Activated CD4-positive, alpha-beta T cell treated with anti-CD3 and anti-CD28 coated beads, Interleukin-2, amount 10 ng/mL, durations not matched to agents 24 days and 14 days (primary cell): ENCODE measurements at regions of chr16 and their contacts with region 1.

Region 1: GRCh38 chr16:30429678-30430427 is at the start of gene DCTPP1:
- DNase-seq: peak; percentile 99
- H3K4me3 Mint-ChIP-seq: no peak within 1 kb of the TSS
- H3K27ac Mint-ChIP-seq: no peak within 1 kb of the TSS
- H3K4me1 Mint-ChIP-seq: peaks cover 27% of the 10 kb centered on the region
- H3K27me3 Mint-ChIP-seq: no peaks in the 10 kb centered on the region
- total RNA-seq, gene DCTPP1: 167 and 176 TPM in 2 replicates

Region 2: DNA sequence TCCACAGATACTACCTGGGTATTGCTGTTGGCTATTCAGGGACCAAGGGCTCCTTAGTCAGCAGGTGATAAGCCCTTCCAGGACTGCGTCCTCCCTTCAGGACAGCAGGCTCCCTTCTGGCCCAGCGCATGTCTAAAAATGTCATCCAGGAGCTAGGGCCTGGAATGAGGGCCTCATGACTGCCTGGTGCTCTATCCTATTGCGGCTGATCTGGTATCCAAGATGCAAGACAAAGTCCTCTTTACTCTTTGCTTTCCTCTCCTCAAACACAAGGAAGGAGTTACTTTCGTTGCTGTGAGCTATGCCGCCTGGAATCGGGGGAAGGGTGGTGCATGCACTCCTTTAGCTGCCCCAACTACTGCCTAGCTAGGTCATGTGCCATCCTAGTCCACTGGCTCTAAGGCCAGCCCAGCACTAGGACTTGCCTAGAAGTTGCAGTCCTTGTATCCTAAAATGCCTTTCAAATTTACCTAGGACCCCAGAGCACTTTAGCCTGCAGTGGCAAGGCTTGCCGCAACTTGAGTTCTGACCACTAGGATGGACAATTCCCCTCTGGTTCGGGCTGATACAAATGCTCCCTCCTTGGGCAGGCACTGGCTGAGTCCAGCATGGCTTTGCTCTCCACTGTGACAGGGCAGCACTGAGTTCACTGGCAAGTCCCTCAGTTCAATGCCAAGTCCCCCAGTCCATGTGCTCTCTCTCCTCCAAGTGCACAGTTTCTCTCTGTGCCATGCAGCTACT is 478.1 kb before region 1 on chr16:
- intact Hi-C with region 1: no loop called
- DNase-seq: no peak
- H3K4me3 Mint-ChIP-seq: no peak overlapping the region
- H3K27ac Mint-ChIP-seq: no peak overlapping the region
- H3K4me1 Mint-ChIP-seq: no peaks in the 10 kb centered on the region
- H3K27me3 Mint-ChIP-seq: peaks cover 5% of the 10 kb centered on the region

Region 3: DNA sequence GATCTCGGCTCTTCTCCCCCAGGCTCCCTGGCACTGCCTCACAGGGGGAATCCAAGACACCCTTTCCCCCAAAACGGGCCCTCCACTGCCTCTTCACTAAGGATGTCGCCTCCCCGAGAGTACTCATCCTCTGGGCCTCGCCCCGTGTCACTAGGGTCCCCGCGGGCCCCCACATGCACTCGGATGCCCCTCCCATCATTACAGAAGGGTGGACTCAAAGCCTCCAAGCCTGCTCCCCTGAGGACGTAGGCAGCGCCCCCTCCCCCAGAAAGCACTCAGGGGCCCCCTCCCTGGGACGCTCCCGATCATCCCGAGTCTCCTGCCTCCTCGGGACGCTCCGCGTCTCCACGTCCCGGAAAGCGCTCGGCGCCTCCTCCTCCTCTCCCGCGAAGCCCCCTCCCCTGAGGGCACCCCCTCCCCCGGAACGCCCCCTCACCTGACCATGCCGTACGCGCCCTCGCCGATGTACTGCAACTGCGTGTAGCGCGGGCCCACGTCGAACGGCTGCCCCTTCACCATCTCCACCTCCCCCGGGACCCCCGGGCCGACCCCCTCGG is 307.2 kb before region 1 on chr16:
- intact Hi-C with region 1: no loop called
- DNase-seq: no peak
- H3K4me3 Mint-ChIP-seq: peak overlapping the region; percentile 91
- H3K27ac Mint-ChIP-seq: peak overlapping the region; percentile 91
- H3K4me1 Mint-ChIP-seq: peaks cover 23% of the 10 kb centered on the region
- H3K27me3 Mint-ChIP-seq: no peaks in the 10 kb centered on the region

Region 4: GRCh38 chr16:30445408-30446202 is 15.8 kb after region 1 on chr16 and contains the start of gene SEPHS2:
- intact Hi-C with region 1: loop called (anchors 1 kb)
- DNase-seq: peak; percentile 99
- H3K4me3 Mint-ChIP-seq: peak within 1 kb of the TSS; percentile 89
- H3K27ac Mint-ChIP-seq: peak within 1 kb of the TSS; percentile 93
- H3K4me1 Mint-ChIP-seq: peaks cover 34% of the 10 kb centered on the region
- H3K27me3 Mint-ChIP-seq: no peaks in the 10 kb centered on the region
- total RNA-seq, gene SEPHS2: 79.7 and 80.2 TPM in 2 replicates

Region 5: DNA sequence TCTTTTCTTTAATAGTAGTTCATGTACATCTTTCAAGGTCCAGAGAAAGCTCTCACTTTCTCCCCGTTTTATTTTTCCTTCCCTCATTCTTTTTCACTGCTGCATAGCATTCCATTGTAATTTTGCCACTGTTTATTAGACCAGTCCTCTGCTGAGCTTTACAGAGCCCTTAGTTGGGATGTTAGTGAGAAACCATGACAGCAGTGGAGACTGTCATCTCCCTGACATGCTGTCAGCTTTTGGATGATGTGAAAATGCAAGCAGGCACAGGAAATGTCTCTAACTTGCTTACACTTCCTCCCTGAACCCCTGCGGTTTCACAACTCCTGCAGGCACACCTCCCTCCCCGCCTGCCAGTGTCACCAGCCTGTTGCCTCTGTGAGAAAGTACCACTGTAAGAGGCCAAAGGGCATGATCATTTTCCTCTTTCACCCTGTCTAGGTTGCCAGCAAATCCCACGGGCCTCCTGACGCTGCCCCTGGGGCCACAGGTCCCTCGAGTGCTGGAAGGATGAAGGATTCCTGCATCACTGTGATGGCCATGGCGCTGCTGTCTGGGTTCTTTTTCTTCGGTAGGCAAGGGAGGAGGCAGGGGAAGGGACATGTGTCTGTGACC is 42.6 kb after region 1 on chr16 and contains the start of gene ITGAL:
- intact Hi-C with region 1: loop called (anchors 1 kb)
- DNase-seq: peak; percentile 95
- H3K4me3 Mint-ChIP-seq: peak within 1 kb of the TSS; percentile 100
- H3K27ac Mint-ChIP-seq: peak within 1 kb of the TSS; percentile 96
- H3K4me1 Mint-ChIP-seq: peaks cover 57% of the 10 kb centered on the region
- H3K27me3 Mint-ChIP-seq: no peaks in the 10 kb centered on the region
- total RNA-seq, gene ITGAL: 264 and 267 TPM in 2 replicates

Region 6: GRCh38 chr16:30534368-30535105 is 104.7 kb after region 1 on chr16 and contains the start of gene ZNF747:
- intact Hi-C with region 1: loop called (anchors 2 kb)
- DNase-seq: peak; percentile 98
- H3K4me3 Mint-ChIP-seq: peak within 1 kb of the TSS; percentile 88
- H3K27ac Mint-ChIP-seq: peak within 1 kb of the TSS; percentile 97
- H3K4me1 Mint-ChIP-seq: peaks cover 31% of the 10 kb centered on the region
- H3K27me3 Mint-ChIP-seq: no peaks in the 10 kb centered on the region
- total RNA-seq, gene ZNF747: 10.5 and 13.6 TPM in 2 replicates

Region 7: DNA sequence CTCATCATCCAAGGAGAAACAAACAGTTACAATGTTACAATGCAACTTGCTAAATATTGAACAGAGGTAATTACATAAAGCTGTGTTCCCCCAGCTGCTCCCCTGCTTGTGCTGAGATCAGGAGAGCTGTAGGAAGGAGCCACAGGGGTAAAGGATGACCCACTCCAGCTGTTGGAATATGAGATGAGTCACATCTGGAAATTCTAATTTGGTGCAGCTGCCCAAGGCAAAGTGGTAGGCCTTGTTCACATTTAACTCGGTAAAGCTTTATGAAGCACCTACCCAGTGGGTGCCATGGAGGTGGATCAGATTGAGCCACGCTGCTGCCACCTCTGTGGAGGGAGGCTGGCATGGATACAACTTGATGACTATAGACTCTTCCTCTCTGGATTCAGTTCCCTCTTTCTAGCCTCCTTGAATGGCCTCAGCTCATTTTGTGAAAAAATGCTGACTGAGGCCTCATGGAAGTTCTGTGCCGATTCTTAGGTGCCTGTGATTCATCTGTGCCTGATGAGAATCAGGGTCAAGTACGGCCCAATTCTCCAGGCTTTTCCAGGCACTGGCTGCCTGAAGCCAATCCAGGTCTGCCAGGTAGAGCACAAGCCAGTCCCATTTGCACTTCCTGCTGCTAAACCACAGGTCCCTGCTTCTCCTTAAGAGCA is 172.9 kb after region 1 on chr16:
- intact Hi-C with region 1: loop called (anchors 1 kb)
- DNase-seq: no peak
- H3K4me3 Mint-ChIP-seq: no peak overlapping the region
- H3K27ac Mint-ChIP-seq: no peak overlapping the region
- H3K4me1 Mint-ChIP-seq: peaks cover 8% of the 10 kb centered on the region
- H3K27me3 Mint-ChIP-seq: no peaks in the 10 kb centered on the region

Region 8: DNA sequence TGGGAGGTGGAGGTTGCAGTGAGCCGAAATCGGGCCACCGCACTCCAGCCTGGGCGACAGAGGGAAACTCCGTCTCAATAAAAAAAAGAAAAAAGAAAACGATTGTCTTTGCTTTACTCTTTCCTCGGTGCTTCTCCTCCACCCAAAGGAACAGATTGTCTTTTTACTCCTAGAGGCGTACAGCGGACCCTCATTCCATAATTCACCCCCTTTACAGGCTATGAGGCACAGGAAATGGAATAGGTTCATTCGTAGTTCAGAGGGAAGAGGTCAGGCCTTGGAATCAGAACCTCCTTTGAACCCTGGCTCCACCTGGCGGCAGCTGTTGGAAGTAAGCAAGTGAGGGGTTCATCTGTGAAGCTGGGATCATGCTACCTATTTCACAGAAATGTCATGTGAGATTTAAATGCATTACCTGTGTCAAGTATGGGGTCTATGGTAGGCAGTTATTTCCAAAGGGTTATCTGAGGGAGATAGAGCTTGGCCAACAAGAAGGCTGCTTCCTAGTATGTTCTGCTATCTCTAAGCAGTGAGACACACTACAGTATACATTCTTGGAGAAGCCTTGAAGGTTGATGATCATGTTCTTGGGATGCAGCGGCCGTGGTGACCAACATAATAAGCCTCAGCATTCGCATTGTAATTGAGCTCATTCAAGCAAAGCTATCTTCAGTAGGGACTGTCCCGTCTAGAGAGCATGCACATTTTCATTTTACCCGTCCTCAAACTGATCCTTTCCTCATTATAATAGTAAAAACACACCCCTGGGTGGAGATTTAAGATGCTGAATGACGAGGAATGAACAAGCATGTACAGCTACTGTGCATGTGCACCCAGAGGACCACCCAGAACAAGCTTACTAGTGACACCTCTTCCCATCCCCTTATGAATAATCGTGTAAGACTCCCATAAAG is 199.0 kb after region 1 on chr16:
- intact Hi-C with region 1: loop called (anchors 1 kb)
- DNase-seq: peak; percentile 96
- H3K4me3 Mint-ChIP-seq: peak overlapping the region; percentile 69
- H3K27ac Mint-ChIP-seq: peak overlapping the region; percentile 84
- H3K4me1 Mint-ChIP-seq: peaks cover 9% of the 10 kb centered on the region
- H3K27me3 Mint-ChIP-seq: no peaks in the 10 kb centered on the region